ENCODE measurements at regions of chr22 and their contacts with region 1.

Region 1: DNA sequence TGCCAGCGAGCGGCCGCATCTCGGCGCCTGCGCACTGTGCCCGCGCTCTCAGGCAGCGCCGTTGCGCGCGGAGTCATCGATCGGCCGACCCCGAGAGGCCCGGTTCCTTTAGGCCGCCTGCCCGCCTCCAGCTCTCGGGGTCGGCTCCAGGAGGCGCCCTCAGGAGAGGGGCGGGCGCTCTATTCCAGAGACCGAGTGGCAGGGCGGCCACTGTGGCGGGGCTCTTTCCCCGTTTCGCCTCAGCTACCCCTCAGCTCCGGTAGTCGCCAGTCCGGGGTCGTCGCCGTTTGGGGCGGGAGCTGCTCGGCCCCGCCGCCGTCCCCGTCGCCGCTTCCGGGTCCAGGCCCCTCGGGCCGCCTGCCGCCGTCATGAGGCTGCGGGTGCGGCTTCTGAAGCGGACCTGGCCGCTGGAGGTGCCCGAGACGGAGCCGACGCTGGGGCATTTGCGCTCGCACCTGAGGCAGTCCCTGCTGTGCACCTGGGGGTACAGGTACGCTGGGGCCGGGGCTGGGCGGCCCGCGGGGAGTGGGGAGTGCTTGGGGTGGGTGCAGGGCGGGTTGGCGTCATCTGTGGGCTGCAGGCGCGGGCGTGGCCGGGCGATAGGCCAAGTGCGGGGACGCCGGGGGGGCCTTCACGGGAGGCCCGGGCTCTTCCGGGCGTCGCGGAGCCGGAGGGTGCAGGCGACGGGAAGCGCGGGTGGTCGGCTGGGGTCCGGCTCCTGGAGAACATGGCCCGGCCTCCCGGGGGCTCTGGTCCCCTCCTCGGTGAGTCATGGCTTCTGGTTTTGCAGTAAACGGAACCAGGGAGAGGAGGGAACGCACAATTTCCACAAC is at the start of gene FBXO7:
- DNase-seq: peak; percentile 91
- CTCF ChIP-seq: peak; percentile 36

Region 2: GRCh38 chr22:32411829-32412592 is 62.8 kb before region 1 on chr22 and contains the start of gene RTCB:
- CTCF ChIA-PET with region 1: interaction called, 12 read pairs
- POLR2A ChIA-PET with region 1: no interaction called
- DNase-seq: peak; percentile 85
- CTCF ChIP-seq: no peak